IMR-90 (cell line): ENCODE measurements at regions of chr9 and their contacts with region 1.

Region 1: GRCh38 chr9:101486693-101487442 is 46.8 kb upstream of the RNF20 start:
- DNase-seq: peak; percentile 54
- ATAC-seq: peak; percentile 85
- H3K4me3 ChIP-seq: peak overlapping the region; percentile 80
- H3K27ac ChIP-seq: peak overlapping the region; percentile 75
- H3K4me1 ChIP-seq: peaks cover 1% of the 10 kb centered on the region; the same call in 1 of the 2 replicates
- H3K27me3 ChIP-seq: no peaks in the 10 kb centered on the region
- CTCF ChIP-seq: peak; percentile 26; the same call in 1 of the 2 replicates
- POLR2A ChIP-seq: 0 out of 2 replicates have a peak, but pooled peaks have one; percentile 33
- RAD21 ChIP-seq: no peak; the same call in 1 of the 2 replicates

Region 2: GRCh38 chr9:100999906-101000544 is 486.8 kb before region 1 on chr9:
- CTCF ChIA-PET with region 1: no interaction called
- POLR2A ChIA-PET with region 1: no interaction called
- dilution Hi-C with region 1: no loop called
- in situ Hi-C with region 1: no loop called
- intact Hi-C with region 1: no loop called
- DNase-seq: no peak
- ATAC-seq: no peak
- H3K4me3 ChIP-seq: no peak overlapping the region
- H3K27ac ChIP-seq: no peak overlapping the region
- H3K4me1 ChIP-seq: no peaks in the 10 kb centered on the region
- H3K27me3 ChIP-seq: no peaks in the 10 kb centered on the region
- CTCF ChIP-seq: no peak
- POLR2A ChIP-seq: no peak
- RAD21 ChIP-seq: no peak

Region 3: DNA sequence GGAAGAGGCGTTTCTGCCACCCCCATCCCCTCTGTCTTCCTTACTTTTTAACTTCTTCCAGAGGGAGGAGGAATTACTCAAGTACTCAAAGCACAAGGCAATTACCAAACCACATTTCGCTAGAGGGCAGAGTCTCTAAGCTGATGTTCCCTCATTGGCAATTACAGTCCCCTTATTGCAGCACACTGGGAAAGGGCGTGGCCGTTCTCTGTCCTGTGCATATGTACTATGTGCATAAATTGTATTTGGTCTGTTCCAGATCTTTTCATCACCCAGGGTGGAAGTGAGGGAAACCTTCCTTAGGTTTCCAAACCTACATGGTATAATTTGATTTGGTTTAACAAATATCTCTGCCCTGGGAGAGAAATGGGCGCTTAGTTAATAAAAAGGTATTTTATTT is 21.5 kb before region 1 on chr9:
- CTCF ChIA-PET with region 1: interaction called, 9 read pairs
- POLR2A ChIA-PET with region 1: no interaction called
- dilution Hi-C with region 1: no loop called
- in situ Hi-C with region 1: no loop called
- intact Hi-C with region 1: loop called (anchors 2 kb)
- DNase-seq: peak; percentile 70
- ATAC-seq: peak; percentile 48; the same call in 1 of the 2 replicates
- H3K4me3 ChIP-seq: no peak overlapping the region
- H3K27ac ChIP-seq: no peak overlapping the region
- H3K4me1 ChIP-seq: no peaks in the 10 kb centered on the region
- H3K27me3 ChIP-seq: no peaks in the 10 kb centered on the region
- CTCF ChIP-seq: peak; percentile 53
- POLR2A ChIP-seq: no peak
- RAD21 ChIP-seq: peak; percentile 49